AG04450 (cell line): ENCODE measurements at regions of chr15 and their contacts with region 1.

Region 1: GRCh38 chr15:98442379-98442833 is 205.9 kb upstream of the IGF1R start:
- DNase-seq: peak; percentile 34
- H3K4me3 ChIP-seq: no peak overlapping the region
- H3K27ac ChIP-seq: no peak overlapping the region
- H3K27me3 ChIP-seq: no peaks in the 10 kb centered on the region
- CTCF ChIP-seq: peak; percentile 91

Region 2: GRCh38 chr15:98123834-98124474 is 318.5 kb before region 1 on chr15:
- CTCF ChIA-PET with region 1: no interaction called
- POLR2A ChIA-PET with region 1: no interaction called
- DNase-seq: no peak
- H3K4me3 ChIP-seq: no peak overlapping the region
- H3K27ac ChIP-seq: no peak overlapping the region
- H3K27me3 ChIP-seq: no peaks in the 10 kb centered on the region
- CTCF ChIP-seq: no peak

Region 3: DNA sequence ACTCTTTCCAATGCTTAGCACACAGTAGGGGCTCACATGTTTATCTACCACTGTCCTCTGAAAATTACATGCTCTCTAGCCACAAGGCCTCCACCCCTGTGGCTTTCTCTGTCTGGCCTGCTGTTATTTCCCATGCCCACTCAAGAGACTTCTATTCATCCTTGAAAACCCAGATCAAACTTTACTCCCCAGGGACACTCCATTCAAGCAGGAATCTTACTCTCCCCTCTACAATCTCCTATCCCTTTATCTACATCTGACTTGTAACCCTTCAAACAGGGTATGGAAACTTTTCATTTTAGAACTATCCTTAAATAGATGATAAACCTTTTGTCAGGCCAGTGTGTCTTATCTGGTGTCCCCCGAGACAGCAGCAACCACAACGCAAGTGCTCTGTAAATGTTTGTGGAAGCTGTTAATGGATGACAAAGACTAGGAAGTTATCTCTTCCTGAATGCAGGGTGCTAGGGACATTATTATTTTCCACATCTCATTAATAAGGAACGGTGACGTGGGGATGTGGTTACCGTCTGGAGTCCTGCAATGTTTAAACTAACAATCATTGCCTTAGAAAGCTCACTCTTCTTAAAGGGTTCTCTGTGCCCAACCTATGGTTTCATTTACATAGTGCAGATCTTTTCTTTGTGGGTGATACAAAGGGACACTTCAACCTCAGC is 159.6 kb before region 1 on chr15:
- CTCF ChIA-PET with region 1: no interaction called
- POLR2A ChIA-PET with region 1: no interaction called
- DNase-seq: no peak
- H3K4me3 ChIP-seq: no peak overlapping the region
- H3K27ac ChIP-seq: no peak overlapping the region
- H3K27me3 ChIP-seq: no peaks in the 10 kb centered on the region
- CTCF ChIP-seq: no peak

Region 4: DNA sequence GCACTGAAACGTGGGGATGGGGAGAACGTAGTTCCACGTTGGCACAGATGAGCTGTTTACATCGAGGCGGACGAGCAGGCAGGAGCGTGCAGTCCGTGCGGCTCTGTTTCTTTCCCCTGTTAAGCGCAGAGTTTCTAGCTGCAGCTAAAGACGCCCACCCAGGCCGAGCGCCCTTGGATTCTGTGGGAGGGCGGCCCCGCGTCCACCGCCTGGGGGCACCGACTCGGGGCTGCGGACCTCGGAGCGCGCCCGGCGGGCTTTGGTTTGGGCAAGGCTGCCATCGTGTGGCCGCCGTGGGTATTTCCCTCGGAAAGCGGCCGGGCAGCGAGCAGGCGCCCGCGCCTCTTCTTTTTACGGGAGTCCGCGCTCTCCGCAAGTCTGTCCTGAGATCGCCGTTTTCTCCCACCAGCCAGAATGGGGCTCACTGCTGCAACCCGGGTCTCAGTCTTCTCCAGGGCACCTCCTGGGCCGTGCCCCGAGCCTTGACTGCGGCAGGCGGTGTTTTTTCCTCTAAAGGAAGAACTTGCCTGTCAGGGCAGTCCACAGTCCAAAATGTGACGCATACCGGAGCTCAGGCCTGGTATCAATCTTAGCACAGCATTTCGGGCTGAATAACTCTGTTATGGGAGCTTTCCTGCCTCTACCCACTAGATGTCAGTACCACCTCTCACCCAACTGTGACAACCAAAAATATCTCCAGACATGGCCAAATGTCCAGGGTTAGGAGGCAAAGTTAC is 14.0 kb before region 1 on chr15:
- CTCF ChIA-PET with region 1: interaction called, 11 read pairs
- POLR2A ChIA-PET with region 1: no interaction called
- DNase-seq: no peak
- H3K4me3 ChIP-seq: peak overlapping the region; percentile 50
- H3K27ac ChIP-seq: no peak overlapping the region
- H3K27me3 ChIP-seq: peaks cover 9% of the 10 kb centered on the region
- CTCF ChIP-seq: peak; percentile 69

Region 5: DNA sequence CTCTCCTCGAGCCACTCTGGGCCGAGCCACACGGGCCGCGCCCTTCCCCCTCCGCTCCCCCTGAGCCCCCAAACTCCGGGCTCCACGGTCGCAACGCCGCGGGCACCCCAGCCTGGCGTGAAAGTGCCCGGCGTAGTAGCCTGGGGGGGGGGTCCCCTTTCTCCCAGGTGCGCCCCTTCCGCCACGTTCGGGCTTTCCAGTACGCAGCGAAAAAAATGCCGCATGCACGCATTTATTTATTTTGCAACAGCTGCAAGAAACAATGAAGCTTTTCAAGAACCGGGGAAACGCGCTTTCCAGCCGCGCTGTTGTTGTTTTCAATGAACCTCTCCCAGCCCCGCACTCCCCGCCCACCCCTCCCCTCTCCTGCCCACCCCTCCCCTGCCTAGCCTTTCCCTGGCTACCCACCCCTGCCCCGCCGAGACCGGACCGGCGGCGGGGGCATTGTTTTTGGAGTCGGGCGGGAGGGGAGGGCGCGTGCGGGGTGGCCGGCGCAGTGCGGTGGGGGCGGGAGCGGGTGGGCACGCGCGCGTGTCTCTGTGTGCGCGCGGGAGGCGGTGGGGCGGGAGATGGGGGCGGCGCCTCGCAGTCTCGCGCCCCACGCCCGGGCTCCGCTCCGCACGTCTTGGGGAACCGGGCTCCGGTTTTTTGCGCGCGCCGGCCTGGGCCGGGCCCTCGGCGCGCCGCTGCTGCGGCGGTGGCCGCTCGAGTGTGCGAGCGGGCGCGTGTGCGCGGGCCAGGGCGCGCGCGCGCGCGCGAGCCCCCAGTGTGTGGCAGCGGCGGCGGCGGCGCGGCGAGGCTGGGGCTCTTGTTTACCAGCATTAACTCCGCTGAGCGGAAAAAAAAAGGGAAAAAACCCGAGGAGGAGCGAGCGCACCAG is 205.6 kb after region 1 on chr15 and contains the start of gene IGF1R:
- CTCF ChIA-PET with region 1: interaction called, 14 read pairs
- POLR2A ChIA-PET with region 1: no interaction called
- DNase-seq: peak; percentile 54
- H3K4me3 ChIP-seq: peak within 1 kb of the TSS; percentile 88
- H3K27ac ChIP-seq: peak within 1 kb of the TSS; percentile 80
- H3K27me3 ChIP-seq: peaks cover 17% of the 10 kb centered on the region
- CTCF ChIP-seq: no peak
- polyA plus RNA-seq, gene IGF1R: 21.6 and 35.4 TPM in 2 replicates